CD4-positive, alpha-beta T cell (primary cell): ENCODE measurements at regions of chr15 and their contacts with region 1.

Region 1: GRCh38 chr15:77070495-77071304 is at the start of gene TSPAN3:
- DNase-seq: peak; percentile 85 to 95 (median 92)
- ATAC-seq: peak; percentile 99
- H3K4me3 ChIP-seq: peak within 1 kb of the TSS; percentile 60
- H3K4me3 Mint-ChIP-seq: peak within 1 kb of the TSS; percentile 97
- H3K27ac ChIP-seq: no peak within 1 kb of the TSS
- H3K27ac Mint-ChIP-seq: peak within 1 kb of the TSS; percentile 85
- H3K4me1 ChIP-seq: peaks cover 18% of the 10 kb centered on the region
- H3K4me1 Mint-ChIP-seq: peaks cover 37% of the 10 kb centered on the region
- H3K27me3 ChIP-seq: no peaks in the 10 kb centered on the region
- H3K27me3 Mint-ChIP-seq: peaks cover 3% of the 10 kb centered on the region
- CTCF ChIP-seq: no peak
- total RNA-seq, gene TSPAN3: 14.7 to 15.5 TPM

Region 2: DNA sequence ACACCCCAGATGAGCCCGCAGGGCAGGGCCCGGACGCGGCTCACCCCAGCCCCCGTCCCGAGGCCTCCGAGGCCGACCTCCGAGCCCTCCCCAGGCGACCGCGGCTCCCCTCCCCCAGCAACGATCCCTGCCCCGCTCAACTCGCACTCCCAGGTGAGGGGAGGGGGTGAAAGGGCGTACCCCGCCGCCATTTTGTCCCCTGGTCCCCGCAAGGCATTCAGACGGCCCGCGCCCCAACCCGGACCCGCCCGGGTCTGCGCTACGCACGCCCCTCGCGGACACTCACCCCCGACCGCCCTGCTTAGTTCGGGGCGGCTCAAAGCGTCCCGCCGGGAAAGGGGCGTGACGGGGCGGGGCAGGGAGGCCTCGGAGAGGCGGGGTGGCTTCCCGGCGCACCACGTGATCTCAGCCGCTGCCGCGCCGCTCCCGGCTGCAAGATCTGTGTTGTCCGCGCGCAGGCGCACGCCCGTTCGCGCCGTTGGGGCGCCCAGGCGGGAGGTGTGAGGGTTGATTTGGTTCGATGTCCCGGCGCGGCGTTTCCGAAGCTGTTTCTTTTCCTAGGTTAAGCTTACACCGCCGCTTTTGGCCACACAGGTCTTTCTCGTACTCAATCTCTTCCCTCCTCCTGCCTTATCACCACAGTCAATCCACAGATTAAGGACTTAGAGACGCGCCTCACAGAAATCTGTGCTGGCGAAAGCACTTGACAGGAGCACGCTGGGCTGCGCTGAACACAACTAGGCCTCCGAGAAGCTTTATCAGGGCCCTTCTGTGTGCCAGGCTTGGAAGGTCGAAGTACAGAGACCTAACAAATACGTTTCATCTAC is 165.5 kb before region 1 on chr15 and contains the start of gene SCAPER:
- CTCF ChIA-PET with region 1: no interaction called
- POLR2A ChIA-PET with region 1: interaction called, 3 read pairs
- intact Hi-C with region 1: loop called (anchors 2 to 5 kb)
- DNase-seq: peak; percentile 77 to 96 (median 90)
- ATAC-seq: peak; percentile 89
- H3K4me3 ChIP-seq: peak within 1 kb of the TSS; percentile 83
- H3K4me3 Mint-ChIP-seq: peak within 1 kb of the TSS; percentile 96
- H3K27ac ChIP-seq: peak within 1 kb of the TSS; percentile 60 to 75
- H3K27ac Mint-ChIP-seq: peak within 1 kb of the TSS; percentile 95
- H3K4me1 ChIP-seq: peaks cover 25% of the 10 kb centered on the region
- H3K4me1 Mint-ChIP-seq: peaks cover 31% of the 10 kb centered on the region
- H3K27me3 ChIP-seq: no peaks in the 10 kb centered on the region
- H3K27me3 Mint-ChIP-seq: no peaks in the 10 kb centered on the region
- CTCF ChIP-seq: no peak
- total RNA-seq, gene SCAPER: 40.3 to 41.2 TPM

Region 3: GRCh38 chr15:76931397-76932007 is 139.2 kb before region 1 on chr15 and contains the start of gene RCN2:
- CTCF ChIA-PET with region 1: no interaction called
- POLR2A ChIA-PET with region 1: no interaction called
- intact Hi-C with region 1: loop called in 1 of 2 experiments (anchors 5 kb)
- DNase-seq: peak; percentile 84 to 96 (median 91)
- ATAC-seq: peak; percentile 98
- H3K4me3 ChIP-seq: peak within 1 kb of the TSS; percentile 59
- H3K4me3 Mint-ChIP-seq: peak within 1 kb of the TSS; percentile 98
- H3K27ac ChIP-seq: peak within 1 kb of the TSS in 1 of 2 donors; percentile 53
- H3K27ac Mint-ChIP-seq: peak within 1 kb of the TSS; percentile 91
- H3K4me1 ChIP-seq: peaks cover 6% of the 10 kb centered on the region
- H3K4me1 Mint-ChIP-seq: peaks cover 41% of the 10 kb centered on the region
- H3K27me3 ChIP-seq: no peaks in the 10 kb centered on the region
- H3K27me3 Mint-ChIP-seq: peaks cover 1% of the 10 kb centered on the region
- CTCF ChIP-seq: no peak
- total RNA-seq, gene RCN2: 18.1 to 19.1 TPM

Region 4: DNA sequence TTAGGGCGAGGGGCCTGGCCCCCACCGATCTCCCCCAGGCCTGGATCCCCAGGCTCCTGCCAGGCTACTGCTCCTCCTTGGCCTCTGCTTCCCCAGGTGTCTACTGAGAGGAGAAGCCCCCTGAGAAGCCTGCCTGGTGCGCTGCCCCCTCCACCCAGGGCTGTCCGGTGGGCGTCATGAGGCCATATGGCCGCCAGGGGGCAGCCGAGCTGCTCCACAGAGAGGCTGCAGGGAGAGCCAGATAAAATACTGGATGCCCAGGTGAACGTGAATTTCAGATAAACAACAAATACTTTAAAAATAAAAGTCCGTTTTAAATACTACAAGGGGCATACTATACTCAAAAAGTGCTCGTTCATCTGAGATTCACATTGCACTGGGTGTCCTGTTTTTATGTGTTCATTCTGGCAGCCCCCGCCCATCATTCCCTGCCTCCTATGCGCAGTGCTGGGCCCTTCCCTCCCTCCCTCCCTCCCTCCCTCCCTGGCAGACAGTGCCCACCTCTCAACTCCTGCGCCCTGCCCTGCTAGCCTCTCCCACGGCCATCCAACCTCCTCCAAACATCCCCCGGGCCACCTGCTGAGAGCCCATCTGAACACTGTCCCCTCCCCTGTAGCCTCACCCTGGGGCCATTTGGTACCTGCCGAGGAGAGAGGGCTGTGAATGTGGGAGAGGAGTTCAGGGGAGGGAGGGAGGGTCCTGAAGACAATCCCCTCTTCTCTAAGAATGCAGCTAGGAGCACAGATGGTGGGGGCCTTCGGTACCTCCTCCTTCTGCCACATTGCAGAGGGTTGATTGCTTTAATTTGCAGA is 46.2 kb before region 1 on chr15:
- CTCF ChIA-PET with region 1: no interaction called
- POLR2A ChIA-PET with region 1: no interaction called
- intact Hi-C with region 1: no loop called
- DNase-seq: peak; percentile 46 to 79 (median 62)
- ATAC-seq: peak; percentile 24
- H3K4me3 ChIP-seq: no peak overlapping the region
- H3K4me3 Mint-ChIP-seq: peak overlapping the region; percentile 48
- H3K27ac ChIP-seq: peak overlapping the region in 1 of 2 donors; percentile 49
- H3K27ac Mint-ChIP-seq: peak overlapping the region; percentile 70
- H3K4me1 ChIP-seq: peaks cover 77% of the 10 kb centered on the region
- H3K4me1 Mint-ChIP-seq: peaks cover 48% of the 10 kb centered on the region
- H3K27me3 ChIP-seq: no peaks in the 10 kb centered on the region
- H3K27me3 Mint-ChIP-seq: no peaks in the 10 kb centered on the region
- CTCF ChIP-seq: peak; percentile 95

Region 5: DNA sequence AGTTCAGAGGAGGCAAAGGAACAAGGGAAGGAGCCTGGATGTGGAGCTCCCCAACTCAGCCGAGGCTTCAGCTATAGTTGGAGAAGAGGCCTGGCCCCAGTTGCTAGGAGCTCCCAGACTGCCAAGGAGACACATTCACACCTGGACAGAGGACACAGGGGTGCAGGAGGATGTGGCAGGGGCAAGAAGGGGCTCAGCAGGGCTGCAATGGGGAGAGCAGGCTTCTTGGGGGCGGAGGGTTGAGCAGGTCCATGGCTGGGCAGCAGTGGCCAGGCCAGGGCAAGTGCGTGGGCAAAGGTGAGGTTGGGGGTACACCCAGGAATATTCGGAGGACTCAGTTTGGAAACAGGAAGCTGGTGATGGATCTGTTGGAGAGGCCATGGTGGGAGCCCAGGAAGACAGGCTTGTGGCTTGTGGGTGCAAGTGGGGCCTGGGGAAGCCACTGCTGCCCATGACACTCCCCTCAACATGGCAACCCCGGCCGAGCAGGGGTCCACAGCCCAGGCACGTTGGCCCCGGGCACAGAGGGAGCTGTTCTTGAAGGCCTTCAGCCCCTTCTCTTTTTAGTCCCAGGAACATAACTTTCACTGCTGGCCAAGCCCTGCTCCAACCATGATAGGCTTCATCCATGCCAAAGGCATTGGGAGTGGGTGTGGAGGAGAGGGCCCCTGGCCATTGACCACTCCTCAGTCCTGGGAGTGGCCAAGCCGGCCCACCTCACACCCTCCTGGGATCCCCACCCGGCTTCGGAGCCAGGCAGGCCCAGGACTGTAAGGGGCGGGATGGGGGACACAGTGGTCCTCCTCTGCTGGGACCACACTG is 33.1 kb before region 1 on chr15:
- CTCF ChIA-PET with region 1: no interaction called
- POLR2A ChIA-PET with region 1: interaction called, 7 read pairs
- intact Hi-C with region 1: loop called in 1 of 2 experiments (anchors 2 kb)
- DNase-seq: peak in 3 of 14 experiments; percentile 1 to 33 (median 31)
- ATAC-seq: no peak
- H3K4me3 ChIP-seq: no peak overlapping the region
- H3K4me3 Mint-ChIP-seq: no peak overlapping the region
- H3K27ac ChIP-seq: peak overlapping the region in 1 of 2 donors; percentile 15
- H3K27ac Mint-ChIP-seq: peak overlapping the region; percentile 69
- H3K4me1 ChIP-seq: no peaks in the 10 kb centered on the region
- H3K4me1 Mint-ChIP-seq: peaks cover 8% of the 10 kb centered on the region
- H3K27me3 ChIP-seq: no peaks in the 10 kb centered on the region
- H3K27me3 Mint-ChIP-seq: no peaks in the 10 kb centered on the region
- CTCF ChIP-seq: no peak